ENCODE measurements at regions of chr4 and their contacts with region 1.

Region 1: GRCh38 chr4:39539089-39539700 is 12.0 kb upstream of the UGDH start:
- DNase-seq: peak; percentile 23 to 80
- H3K4me3 ChIP-seq: no peak overlapping the region; the same call in 1 of the 2 replicates
- H3K27ac ChIP-seq: peak overlapping the region; percentile 85
- H3K4me1 ChIP-seq: peaks cover 65% of the 10 kb centered on the region
- H3K27me3 ChIP-seq: no peaks in the 10 kb centered on the region
- CTCF ChIP-seq: no peak

Region 2: GRCh38 chr4:38911257-38911656 is 627.9 kb before region 1 on chr4:
- CTCF ChIA-PET with region 1: interaction called, 10 read pairs
- POLR2A ChIA-PET with region 1: no interaction called
- intact Hi-C with region 1: no loop called
- DNase-seq: no peak
- H3K4me3 ChIP-seq: no peak overlapping the region
- H3K27ac ChIP-seq: no peak overlapping the region
- H3K4me1 ChIP-seq: no peaks in the 10 kb centered on the region
- H3K27me3 ChIP-seq: no peaks in the 10 kb centered on the region
- CTCF ChIP-seq: no peak

Measured in PC-9 (cell line).